ENCODE measurements at regions of chr3 and their contacts with region 1.

Region 1: DNA sequence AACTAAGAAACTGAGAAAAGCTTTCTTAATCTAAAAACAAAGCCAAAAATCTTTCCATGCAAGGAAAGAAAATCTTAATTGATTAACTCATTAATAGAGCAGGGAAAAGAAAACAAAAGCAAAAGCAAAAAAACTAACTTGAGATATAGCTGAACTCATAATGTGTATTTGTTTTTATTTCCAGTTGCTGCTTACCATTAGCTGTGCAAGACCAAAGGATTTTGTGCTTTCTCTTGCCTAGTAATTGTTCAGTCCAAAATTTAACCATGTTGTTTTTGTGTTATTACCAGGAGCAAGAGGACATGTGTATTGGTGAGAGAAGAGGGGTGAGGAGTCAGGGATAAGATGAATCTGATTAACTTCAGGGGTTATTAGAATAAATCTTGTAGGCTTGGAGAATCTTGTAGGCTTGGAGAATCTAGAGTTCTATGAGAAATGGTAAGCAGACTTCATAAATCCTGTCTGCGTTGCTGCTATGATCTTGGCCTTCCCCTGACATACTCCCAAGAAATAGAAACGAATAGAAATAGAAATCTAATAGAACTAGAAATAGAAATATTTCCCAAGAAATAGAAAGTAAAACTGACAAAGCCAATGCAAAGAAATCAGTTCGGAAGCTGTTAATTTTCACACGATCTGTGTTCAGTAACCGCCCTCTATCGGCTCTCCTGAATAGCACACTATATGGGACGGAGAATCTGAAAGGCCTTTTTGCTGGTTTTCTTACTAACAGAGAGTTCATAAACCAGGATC is 72.6 kb upstream of the TNFSF10 start:
- DNase-seq: no peak
- H3K4me3 ChIP-seq: peak overlapping the region in 3 of 4 donors; percentile 27 to 53 (median 38)
- H3K27ac ChIP-seq: peak overlapping the region; percentile 86 to 93 (median 90)
- H3K4me1 ChIP-seq: peaks cover 8 to 55% (median 19%) of the 10 kb centered on the region in 3 donors
- H3K27me3 ChIP-seq: no peaks in the 10 kb centered on the region
- CTCF ChIP-seq: peak; percentile 69 to 94 (median 84)
- POLR2A ChIP-seq: no peak

Region 2: DNA sequence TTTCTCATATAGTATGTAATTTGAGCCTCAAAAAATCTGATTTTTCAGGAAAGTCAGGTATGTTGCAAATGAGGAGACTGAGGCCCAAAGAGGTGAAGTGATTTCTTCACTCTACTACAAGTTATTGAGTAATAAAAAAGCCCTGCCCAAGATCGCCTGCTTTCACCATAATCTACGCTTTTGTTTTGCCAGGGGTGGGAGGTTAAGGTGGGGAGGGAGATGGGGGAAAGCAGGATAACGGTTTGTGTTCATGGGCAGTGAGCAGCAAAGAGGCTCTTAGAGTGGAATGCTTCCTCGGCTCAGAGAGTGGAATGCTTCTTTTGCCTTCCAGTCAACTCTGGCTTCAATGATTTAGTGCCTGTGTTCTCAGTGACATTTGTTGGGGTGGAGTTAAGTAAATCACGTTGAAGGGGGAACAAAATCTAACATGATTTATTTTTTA is 651.3 kb before region 1 on chr3:
- intact Hi-C with region 1: no loop called
- DNase-seq: no peak
- H3K4me3 ChIP-seq: no peak overlapping the region
- H3K27ac ChIP-seq: no peak overlapping the region
- H3K4me1 ChIP-seq: peaks cover 0 to 5% (median 0%) of the 10 kb centered on the region in 3 donors
- H3K27me3 ChIP-seq: no peaks in the 10 kb centered on the region
- CTCF ChIP-seq: no peak
- POLR2A ChIP-seq: no peak

Region 3: GRCh38 chr3:172189987-172190603 is 405.7 kb before region 1 on chr3:
- intact Hi-C with region 1: no loop called
- DNase-seq: no peak
- H3K4me3 ChIP-seq: no peak overlapping the region
- H3K27ac ChIP-seq: no peak overlapping the region
- H3K4me1 ChIP-seq: peaks cover 0 to 6% (median 0%) of the 10 kb centered on the region in 3 donors
- H3K27me3 ChIP-seq: no peaks in the 10 kb centered on the region
- CTCF ChIP-seq: no peak
- POLR2A ChIP-seq: no peak

Region 4: GRCh38 chr3:172476347-172476746 is 119.5 kb before region 1 on chr3:
- intact Hi-C with region 1: loop called (anchors 10 kb)
- DNase-seq: no peak
- H3K4me3 ChIP-seq: peak overlapping the region in 2 of 4 donors; percentile 43 to 59
- H3K27ac ChIP-seq: peak overlapping the region in 2 of 4 donors; percentile 64 to 75
- H3K4me1 ChIP-seq: peaks cover 0 to 15% (median 0%) of the 10 kb centered on the region in 3 donors
- H3K27me3 ChIP-seq: no peaks in the 10 kb centered on the region
- CTCF ChIP-seq: no peak
- POLR2A ChIP-seq: no peak

Region 5: GRCh38 chr3:172522871-172523818 is 72.7 kb before region 1 on chr3 and contains the start of gene TNFSF10:
- intact Hi-C with region 1: loop called (anchors 10 kb)
- DNase-seq: peak; percentile 24
- H3K4me3 ChIP-seq: peak within 1 kb of the TSS; percentile 45 to 84 (median 65)
- H3K27ac ChIP-seq: peak within 1 kb of the TSS; percentile 85 to 92 (median 90)
- H3K4me1 ChIP-seq: peaks cover 15 to 55% (median 24%) of the 10 kb centered on the region in 3 donors
- H3K27me3 ChIP-seq: no peaks in the 10 kb centered on the region
- CTCF ChIP-seq: no peak
- POLR2A ChIP-seq: peak in 3 of 4 donors; percentile 49 to 91 (median 89)
- total RNA-seq, gene TNFSF10: 61.7 to 128 (median 83.8) TPM